Gastrocnemius medialis (tissue), 4 donors: ENCODE measurements at regions of chr5 and their contacts with region 1.

Region 1: GRCh38 chr5:150272526-150272925 is 17.0 kb downstream of the CAMK2A start:
- DNase-seq: no peak
- ATAC-seq: no peak
- H3K4me3 ChIP-seq: no peak overlapping the region
- H3K27ac ChIP-seq: no peak overlapping the region
- H3K4me1 ChIP-seq: peaks cover 13 to 15% of the 10 kb centered on the region in 2 donors
- H3K27me3 ChIP-seq: no peaks in the 10 kb centered on the region
- CTCF ChIP-seq: peak in 1 of 5 experiments; percentile 18
- POLR2A ChIP-seq: no peak

Region 2: GRCh38 chr5:150412319-150413175 is 140.0 kb after region 1 on chr5 and contains the start of gene CD74:
- in situ Hi-C with region 1: no loop called
- intact Hi-C with region 1: no loop called
- DNase-seq: peak; percentile 32 to 62
- ATAC-seq: peak; percentile 29
- H3K4me3 ChIP-seq: peak within 1 kb of the TSS; percentile 49 to 56 (median 51)
- H3K27ac ChIP-seq: peak within 1 kb of the TSS; percentile 63 to 83 (median 78)
- H3K4me1 ChIP-seq: peaks cover 6 to 10% of the 10 kb centered on the region in 2 donors
- H3K27me3 ChIP-seq: no peaks in the 10 kb centered on the region
- CTCF ChIP-seq: no peak
- POLR2A ChIP-seq: peak; percentile 40 to 66
- total RNA-seq, gene CD74: 123 to 291 (median 160) TPM

Region 3: GRCh38 chr5:150436141-150436680 is 163.7 kb after region 1 on chr5:
- in situ Hi-C with region 1: no loop called
- intact Hi-C with region 1: loop called (anchors 10 kb)
- DNase-seq: peak; percentile 65 to 82
- ATAC-seq: peak; percentile 86 to 94
- H3K4me3 ChIP-seq: no peak overlapping the region
- H3K27ac ChIP-seq: no peak overlapping the region
- H3K4me1 ChIP-seq: no peaks in the 10 kb centered on the region
- H3K27me3 ChIP-seq: no peaks in the 10 kb centered on the region
- CTCF ChIP-seq: peak; percentile 77 to 91 (median 87)
- POLR2A ChIP-seq: no peak